ENCODE measurements at regions of chr20 and their contacts with region 1.

Region 1: GRCh38 chr20:46520976-46521579 is 7.7 kb upstream of the ZNF334 start:
- DNase-seq: peak; percentile 73

Region 2: DNA sequence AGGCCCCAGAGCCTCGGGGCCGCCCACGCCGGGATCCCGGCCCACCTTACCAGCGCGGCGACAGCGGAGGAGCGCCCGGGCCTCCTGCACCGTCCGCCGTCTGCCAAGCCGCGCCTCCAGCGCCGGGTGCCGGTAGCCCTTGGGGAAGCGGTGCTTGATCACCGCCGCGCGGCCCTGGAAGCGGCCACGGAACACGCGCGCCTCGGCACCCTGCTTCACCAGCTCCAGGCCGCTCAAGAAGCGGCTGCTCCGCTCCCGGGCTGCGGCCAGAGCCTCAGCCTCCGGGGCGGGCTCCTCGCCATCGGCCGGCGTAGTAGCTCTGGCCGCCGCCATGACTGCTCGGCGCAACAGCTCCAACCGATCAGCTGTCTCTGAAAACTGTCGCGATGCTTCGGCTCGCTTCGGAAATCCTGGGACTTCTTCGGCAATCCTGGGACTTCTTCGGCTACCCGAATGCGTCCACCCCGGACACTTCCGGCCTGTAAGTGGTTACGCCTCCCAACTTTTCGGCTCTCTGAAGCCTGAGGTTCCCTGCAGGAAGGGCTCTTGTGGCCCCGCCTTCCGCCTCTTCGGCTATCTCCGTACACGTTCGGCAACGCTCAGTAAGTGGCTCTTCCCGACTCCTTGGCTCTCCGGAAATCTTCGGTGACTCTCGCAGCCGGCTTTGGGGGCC is 168.1 kb after region 1 on chr20 and contains the start of gene TP53RK:
- in situ Hi-C with region 1: loop called (anchors 10 kb)
- DNase-seq: peak; percentile 99